ENCODE measurements at regions of chr12 and their contacts with region 1.

Region 1: GRCh38 chr12:102769319-102769916 is 147.6 kb downstream of the PAH start:
- DNase-seq: peak; percentile 10
- H3K4me3 ChIP-seq: no peak overlapping the region
- H3K27ac ChIP-seq: no peak overlapping the region
- H3K27me3 ChIP-seq: no peaks in the 10 kb centered on the region
- CTCF ChIP-seq: peak; percentile 84

Region 2: GRCh38 chr12:102300824-102301461 is 468.5 kb before region 1 on chr12:
- CTCF ChIA-PET with region 1: interaction called, 10 read pairs
- POLR2A ChIA-PET with region 1: no interaction called
- DNase-seq: no peak
- H3K4me3 ChIP-seq: no peak overlapping the region
- H3K27ac ChIP-seq: no peak overlapping the region
- H3K27me3 ChIP-seq: no peaks in the 10 kb centered on the region
- CTCF ChIP-seq: peak; percentile 62